ENCODE measurements at regions of chr11 and their contacts with region 1.

Region 1: GRCh38 chr11:19076744-19077589 is 16.4 kb upstream of the MRGPRX2 start:
- DNase-seq: peak; percentile 81
- H3K4me3 Mint-ChIP-seq: no peak overlapping the region
- H3K27ac Mint-ChIP-seq: no peak overlapping the region
- H3K4me1 Mint-ChIP-seq: peaks cover 1% of the 10 kb centered on the region
- H3K27me3 Mint-ChIP-seq: peaks cover 12% of the 10 kb centered on the region

Region 2: DNA sequence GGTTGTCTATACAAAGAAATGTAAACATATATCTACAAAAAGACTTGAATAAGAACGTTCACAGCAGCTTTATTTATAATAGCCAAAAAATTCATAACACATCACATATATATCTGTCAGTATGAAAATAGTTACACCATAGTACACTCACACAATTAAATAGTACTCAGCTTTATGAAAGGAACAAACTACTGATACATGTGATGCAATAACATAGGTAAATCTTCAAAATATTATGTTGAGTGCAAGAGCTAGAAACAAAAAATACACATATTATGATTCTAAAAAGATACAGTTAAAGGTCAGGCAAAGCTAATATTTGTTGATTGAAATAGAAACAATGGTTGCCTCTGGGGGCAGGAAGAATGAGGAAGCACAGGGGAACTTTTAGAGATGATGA is 23.1 kb before region 1 on chr11:
- CTCF ChIA-PET with region 1: interaction called, 10 read pairs
- intact Hi-C with region 1: no loop called
- DNase-seq: no peak
- H3K4me3 Mint-ChIP-seq: no peak overlapping the region
- H3K27ac Mint-ChIP-seq: no peak overlapping the region
- H3K4me1 Mint-ChIP-seq: no peaks in the 10 kb centered on the region
- H3K27me3 Mint-ChIP-seq: peaks cover 4% of the 10 kb centered on the region

Region 3: DNA sequence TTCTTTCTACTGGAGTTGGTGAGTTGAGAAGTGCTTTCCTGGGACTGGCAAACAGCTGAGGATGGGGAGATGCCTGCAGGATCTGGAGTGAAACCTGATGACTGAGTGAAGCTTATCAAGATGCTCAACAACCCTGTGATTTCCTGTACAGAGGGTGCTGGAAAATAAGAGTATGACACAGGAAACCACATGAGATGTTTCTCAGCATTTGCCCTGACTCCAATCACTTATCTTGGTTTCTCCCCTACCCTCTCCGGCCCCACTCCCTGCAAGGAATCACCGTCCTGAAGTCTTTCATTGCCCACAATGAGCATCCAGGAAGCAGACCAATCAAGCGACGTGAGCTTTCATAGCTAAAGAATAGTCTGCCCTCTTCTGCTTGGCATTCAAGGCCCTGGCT is 16.3 kb before region 1 on chr11 and contains the start of gene MRGPRX2:
- CTCF ChIA-PET with region 1: interaction called, 17 read pairs
- intact Hi-C with region 1: no loop called
- DNase-seq: peak; percentile 58
- H3K4me3 Mint-ChIP-seq: no peak within 1 kb of the TSS
- H3K27ac Mint-ChIP-seq: no peak within 1 kb of the TSS
- H3K4me1 Mint-ChIP-seq: peaks cover 18% of the 10 kb centered on the region
- H3K27me3 Mint-ChIP-seq: peaks cover 1% of the 10 kb centered on the region
- total RNA-seq, gene MRGPRX2: not detected

Region 4: GRCh38 chr11:19110280-19110679 is 33.3 kb after region 1 on chr11:
- CTCF ChIA-PET with region 1: interaction called, 11 read pairs
- intact Hi-C with region 1: no loop called
- DNase-seq: no peak
- H3K4me3 Mint-ChIP-seq: no peak overlapping the region
- H3K27ac Mint-ChIP-seq: no peak overlapping the region
- H3K4me1 Mint-ChIP-seq: no peaks in the 10 kb centered on the region
- H3K27me3 Mint-ChIP-seq: peaks cover 3% of the 10 kb centered on the region

Region 5: DNA sequence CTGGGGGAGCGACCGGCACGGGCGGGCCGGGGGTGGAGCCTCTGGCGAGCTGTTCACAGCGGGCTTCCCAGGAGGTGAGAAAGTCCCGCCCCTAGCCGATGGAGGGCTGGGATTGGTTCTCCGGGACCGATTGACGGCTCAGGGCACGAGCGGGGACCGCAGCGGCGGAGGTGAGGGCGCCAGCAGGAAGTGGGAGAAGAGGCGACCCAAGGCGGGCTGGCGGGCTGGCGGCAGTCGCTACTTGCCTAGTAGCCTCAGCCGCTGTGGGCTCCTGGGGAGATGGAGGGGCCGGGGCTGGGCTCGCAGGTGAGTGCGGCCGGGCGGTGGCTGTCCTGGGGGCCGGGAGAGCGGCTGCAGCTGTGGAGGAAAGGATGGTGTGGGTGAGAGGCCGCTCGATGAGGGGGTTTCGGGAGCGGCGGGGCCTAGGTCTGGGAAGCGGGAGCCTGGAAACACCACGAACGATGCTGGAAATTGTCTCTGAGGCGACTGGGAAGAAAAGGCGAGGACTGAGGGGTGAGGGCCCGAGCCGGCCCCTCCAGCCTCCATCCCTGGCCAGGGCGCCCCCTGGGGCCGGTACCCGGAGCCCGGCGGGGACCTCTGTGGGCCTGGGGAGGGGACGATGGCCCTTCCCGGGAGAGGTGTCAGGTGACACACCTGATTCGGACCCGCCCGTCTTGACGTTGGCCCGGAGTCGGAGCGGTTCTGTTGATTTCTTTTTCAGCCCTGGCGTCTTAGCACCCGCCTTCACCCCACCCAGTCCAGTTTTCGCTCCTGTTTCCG is 40.2 kb after region 1 on chr11 and contains the start of gene ZDHHC13:
- CTCF ChIA-PET with region 1: interaction called, 7 read pairs
- intact Hi-C with region 1: loop called (anchors 1 kb)
- DNase-seq: peak; percentile 98
- H3K4me3 Mint-ChIP-seq: peak within 1 kb of the TSS; percentile 89
- H3K27ac Mint-ChIP-seq: peak within 1 kb of the TSS; percentile 79
- H3K4me1 Mint-ChIP-seq: peaks cover 49% of the 10 kb centered on the region
- H3K27me3 Mint-ChIP-seq: no peaks in the 10 kb centered on the region
- total RNA-seq, gene ZDHHC13: 20.9 to 25.1 TPM

Region 6: GRCh38 chr11:19134004-19134403 is 57.0 kb after region 1 on chr11:
- CTCF ChIA-PET with region 1: no interaction called
- intact Hi-C with region 1: no loop called
- DNase-seq: no peak
- H3K4me3 Mint-ChIP-seq: no peak overlapping the region
- H3K27ac Mint-ChIP-seq: no peak overlapping the region
- H3K4me1 Mint-ChIP-seq: no peaks in the 10 kb centered on the region
- H3K27me3 Mint-ChIP-seq: no peaks in the 10 kb centered on the region

Region 7: DNA sequence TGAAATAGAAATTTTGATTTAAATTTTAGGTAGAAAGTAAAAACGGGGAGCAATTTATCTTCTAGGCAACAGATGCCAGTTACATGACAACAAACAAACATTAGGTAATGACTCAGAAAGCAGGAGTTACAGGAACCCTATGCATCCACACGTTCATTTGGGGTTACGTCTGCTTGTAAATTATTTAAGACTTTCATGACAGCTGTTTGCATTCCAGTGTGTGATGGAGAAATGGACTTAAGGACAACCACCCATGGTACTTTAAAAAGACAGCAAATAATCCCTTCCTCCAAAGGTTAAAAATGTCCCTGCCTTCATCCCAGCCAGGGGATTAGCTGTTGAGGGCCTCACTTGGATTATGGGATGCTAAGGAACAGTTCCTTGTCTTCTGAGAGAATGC is 152.0 kb after region 1 on chr11:
- CTCF ChIA-PET with region 1: no interaction called
- intact Hi-C with region 1: no loop called
- DNase-seq: no peak
- H3K4me3 Mint-ChIP-seq: no peak overlapping the region
- H3K27ac Mint-ChIP-seq: no peak overlapping the region
- H3K4me1 Mint-ChIP-seq: peaks cover 2% of the 10 kb centered on the region
- H3K27me3 Mint-ChIP-seq: peaks cover 3% of the 10 kb centered on the region

Region 8: GRCh38 chr11:19595840-19596751 is 519.1 kb after region 1 on chr11:
- CTCF ChIA-PET with region 1: no interaction called
- intact Hi-C with region 1: no loop called
- DNase-seq: no peak
- H3K4me3 Mint-ChIP-seq: no peak overlapping the region
- H3K27ac Mint-ChIP-seq: no peak overlapping the region
- H3K4me1 Mint-ChIP-seq: no peaks in the 10 kb centered on the region
- H3K27me3 Mint-ChIP-seq: peaks cover 17% of the 10 kb centered on the region

Measured in activated naive CD4-positive, alpha-beta T cell treated with anti-CD3 and anti-CD28 coated beads for 36 hours (primary cell).